CD8-positive, alpha-beta T cell (primary cell): ENCODE measurements at regions of chr4 and their contacts with region 1.

Region 1: GRCh38 chr4:986879-987623 is at the start of gene IDUA:
- DNase-seq: peak; percentile 76 to 94 (median 87)
- ATAC-seq: peak; percentile 85
- H3K4me3 ChIP-seq: peak within 1 kb of the TSS; percentile 64 to 89
- H3K4me3 Mint-ChIP-seq: peak within 1 kb of the TSS; percentile 89
- H3K27ac ChIP-seq: peak within 1 kb of the TSS; percentile 62 to 65
- H3K27ac Mint-ChIP-seq: peak within 1 kb of the TSS; percentile 91
- H3K4me1 ChIP-seq: peaks cover 35% of the 10 kb centered on the region
- H3K4me1 Mint-ChIP-seq: peaks cover 31% of the 10 kb centered on the region
- H3K27me3 ChIP-seq: no peaks in the 10 kb centered on the region
- H3K27me3 Mint-ChIP-seq: no peaks in the 10 kb centered on the region
- CTCF ChIP-seq: peak; percentile 61
- total RNA-seq, gene IDUA: 54.3 to 62.0 TPM

Region 2: GRCh38 chr4:337143-337931 is 649.7 kb before region 1 on chr4 and contains the start of gene ZNF141:
- CTCF ChIA-PET with region 1: no interaction called
- POLR2A ChIA-PET with region 1: no interaction called
- intact Hi-C with region 1: loop called in 1 of 2 experiments (anchors 5 kb)
- DNase-seq: peak; percentile 84 to 97 (median 91)
- ATAC-seq: peak; percentile 88
- H3K4me3 ChIP-seq: peak within 1 kb of the TSS; percentile 94 to 95
- H3K4me3 Mint-ChIP-seq: peak within 1 kb of the TSS; percentile 99
- H3K27ac ChIP-seq: peak within 1 kb of the TSS; percentile 90 to 95
- H3K27ac Mint-ChIP-seq: peak within 1 kb of the TSS; percentile 99
- H3K4me1 ChIP-seq: peaks cover 17% of the 10 kb centered on the region
- H3K4me1 Mint-ChIP-seq: peaks cover 46% of the 10 kb centered on the region
- H3K27me3 ChIP-seq: no peaks in the 10 kb centered on the region
- H3K27me3 Mint-ChIP-seq: no peaks in the 10 kb centered on the region
- CTCF ChIP-seq: no peak
- total RNA-seq, gene ZNF141: 16.3 to 19.9 TPM

Region 3: DNA sequence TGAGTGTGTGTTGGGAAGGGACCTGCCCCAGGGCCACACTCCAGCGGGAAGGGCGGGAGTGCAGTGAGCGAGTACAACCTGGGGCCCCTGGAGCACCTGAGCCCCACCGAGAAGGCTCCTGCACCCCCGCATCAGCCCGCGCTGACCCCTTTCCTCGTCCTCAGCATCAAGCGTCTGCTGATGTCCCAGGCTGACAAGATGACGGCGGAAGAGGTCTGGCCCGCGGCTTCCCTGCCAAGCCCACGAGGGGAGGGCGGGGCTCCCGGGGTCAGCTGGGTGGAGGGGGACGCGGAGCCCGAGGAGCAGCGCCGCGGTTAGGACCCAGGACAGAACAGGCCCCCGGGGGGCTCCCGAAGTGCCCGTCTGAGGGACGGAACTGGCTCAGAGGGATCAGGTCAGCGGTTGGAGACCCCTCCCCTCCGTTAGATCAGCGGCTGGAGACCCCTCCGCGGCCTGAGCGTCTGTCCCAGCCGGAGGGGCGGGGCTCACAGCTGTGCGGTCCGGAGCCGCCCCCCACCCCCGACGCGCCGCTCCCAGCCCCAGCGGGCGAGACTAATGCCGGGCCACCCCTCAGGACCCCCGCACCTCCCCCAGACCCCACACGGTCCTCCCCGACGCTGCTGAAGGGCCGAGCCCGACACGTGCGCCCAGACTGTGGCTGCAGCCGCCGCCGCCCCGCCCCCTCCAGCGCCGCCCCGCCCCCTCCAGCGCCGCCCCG is 306.0 kb before region 1 on chr4:
- CTCF ChIA-PET with region 1: no interaction called
- POLR2A ChIA-PET with region 1: no interaction called
- intact Hi-C with region 1: no loop called
- DNase-seq: peak in 7 of 9 experiments; percentile 41 to 76 (median 55)
- ATAC-seq: peak; percentile 48
- H3K4me3 ChIP-seq: peak overlapping the region; percentile 54 to 56
- H3K4me3 Mint-ChIP-seq: peak overlapping the region; percentile 63
- H3K27ac ChIP-seq: peak overlapping the region in 1 of 2 experiments; percentile 69
- H3K27ac Mint-ChIP-seq: peak overlapping the region; percentile 27
- H3K4me1 ChIP-seq: peaks cover 9% of the 10 kb centered on the region
- H3K4me1 Mint-ChIP-seq: peaks cover 13% of the 10 kb centered on the region
- H3K27me3 ChIP-seq: no peaks in the 10 kb centered on the region
- H3K27me3 Mint-ChIP-seq: peaks cover 8% of the 10 kb centered on the region
- CTCF ChIP-seq: no peak

Region 4: GRCh38 chr4:705278-706082 is 281.6 kb before region 1 on chr4 and contains the start of gene PCGF3:
- CTCF ChIA-PET with region 1: no interaction called
- POLR2A ChIA-PET with region 1: no interaction called
- intact Hi-C with region 1: loop called in 1 of 2 experiments (anchors 1 kb)
- DNase-seq: peak; percentile 92 to 97 (median 95)
- ATAC-seq: peak; percentile 98
- H3K4me3 ChIP-seq: peak within 1 kb of the TSS; percentile 75 to 89
- H3K4me3 Mint-ChIP-seq: peak within 1 kb of the TSS; percentile 82
- H3K27ac ChIP-seq: peak within 1 kb of the TSS; percentile 68 to 75
- H3K27ac Mint-ChIP-seq: peak within 1 kb of the TSS; percentile 60
- H3K4me1 ChIP-seq: peaks cover 24% of the 10 kb centered on the region
- H3K4me1 Mint-ChIP-seq: peaks cover 28% of the 10 kb centered on the region
- H3K27me3 ChIP-seq: no peaks in the 10 kb centered on the region
- H3K27me3 Mint-ChIP-seq: no peaks in the 10 kb centered on the region
- CTCF ChIP-seq: no peak
- total RNA-seq, gene PCGF3: 39.1 to 39.5 TPM

Region 5: DNA sequence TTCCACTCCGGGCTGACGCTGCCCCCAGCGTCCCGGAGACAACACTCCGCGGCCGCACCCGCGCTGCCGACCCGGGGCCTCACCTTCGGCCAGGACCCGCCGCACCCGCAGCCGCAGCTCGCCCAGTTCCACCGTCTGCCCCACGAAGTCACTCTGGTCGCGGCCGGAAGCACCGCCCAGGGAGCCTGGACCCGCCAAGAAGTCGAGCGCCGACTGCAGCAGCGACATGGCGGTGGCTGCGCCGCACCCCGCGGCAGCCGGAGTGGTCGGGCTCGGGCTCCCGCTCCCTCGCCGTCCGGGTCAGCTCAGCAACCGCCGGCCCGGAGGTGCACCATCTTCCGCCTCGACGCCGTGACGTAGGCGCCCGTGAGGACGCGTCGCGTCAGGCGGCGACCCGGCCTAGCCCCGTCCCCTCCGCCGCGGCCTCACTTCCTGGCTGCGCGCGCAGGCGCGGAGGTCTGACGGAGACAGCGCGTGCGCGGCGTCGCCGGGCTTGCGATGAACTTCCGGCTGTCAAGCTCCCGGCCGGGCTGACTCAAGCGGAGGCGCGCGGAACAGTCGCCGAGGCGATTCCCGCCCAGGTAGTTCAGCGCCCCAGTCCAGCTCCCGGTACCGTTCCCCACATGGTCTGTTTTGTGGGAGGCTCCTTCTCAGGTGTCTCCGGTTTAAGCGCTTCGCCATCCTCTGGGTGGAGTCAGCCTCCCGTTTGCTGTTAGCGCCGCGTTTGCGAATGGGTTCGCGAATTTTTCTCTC is 54.9 kb before region 1 on chr4 and contains the starts of genes GAK and TMEM175:
- CTCF ChIA-PET with region 1: interaction called, 9 read pairs
- POLR2A ChIA-PET with region 1: interaction called, 7 read pairs
- intact Hi-C with region 1: loop called (anchors 1 kb)
- DNase-seq: peak; percentile 90 to 99 (median 96)
- ATAC-seq: peak; percentile 91
- H3K4me3 ChIP-seq: peak within 1 kb of the TSS; percentile 91 to 96
- H3K4me3 Mint-ChIP-seq: peak within 1 kb of the TSS; percentile 96
- H3K27ac ChIP-seq: peak within 1 kb of the TSS; percentile 91 to 92
- H3K27ac Mint-ChIP-seq: peak within 1 kb of the TSS; percentile 97
- H3K4me1 ChIP-seq: peaks cover 39% of the 10 kb centered on the region
- H3K4me1 Mint-ChIP-seq: peaks cover 51% of the 10 kb centered on the region
- H3K27me3 ChIP-seq: no peaks in the 10 kb centered on the region
- H3K27me3 Mint-ChIP-seq: no peaks in the 10 kb centered on the region
- CTCF ChIP-seq: no peak
- total RNA-seq, gene GAK: 161 to 162 TPM
- total RNA-seq, gene TMEM175: 44.9 to 47.2 TPM

Region 6: DNA sequence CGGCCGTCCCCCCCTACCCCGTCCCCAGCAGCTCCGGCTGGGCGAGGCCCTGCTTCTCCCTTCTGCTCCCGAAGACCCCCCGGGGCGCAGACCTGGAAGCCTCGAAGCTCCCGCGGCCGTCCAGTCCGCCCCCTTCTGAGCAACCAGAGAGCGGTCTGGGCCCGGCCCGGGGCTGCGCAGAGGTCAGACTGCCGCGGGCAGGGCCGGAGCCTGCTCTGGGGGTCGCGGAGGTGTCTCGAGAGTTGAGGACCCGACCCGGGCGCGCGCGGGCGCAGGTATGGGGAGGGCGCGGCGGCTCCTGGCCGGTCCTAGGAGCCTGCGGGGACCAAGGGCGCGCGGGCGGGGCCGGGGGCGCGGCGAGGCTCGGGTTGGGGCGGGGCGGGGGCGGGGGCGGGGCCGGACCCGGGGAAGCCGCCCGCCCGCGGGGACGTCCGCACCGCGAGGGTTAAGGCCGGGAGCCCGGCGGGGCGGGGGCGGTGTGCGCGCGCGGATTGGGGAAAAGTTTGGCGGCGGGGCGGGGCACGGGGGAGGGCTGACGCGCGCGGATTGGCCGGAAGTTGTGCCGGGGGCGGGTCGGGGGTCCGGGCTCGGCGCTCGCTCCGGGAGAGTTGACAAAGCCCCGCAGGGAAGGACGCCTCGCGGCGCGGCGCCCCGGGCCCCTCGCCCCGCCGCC is 24.1 kb after region 1 on chr4 and contains the start of gene FGFRL1:
- CTCF ChIA-PET with region 1: interaction called, 3 read pairs
- POLR2A ChIA-PET with region 1: interaction called, 3 read pairs
- intact Hi-C with region 1: loop called (anchors 1 kb)
- DNase-seq: peak; percentile 83 to 94 (median 93)
- ATAC-seq: peak; percentile 55
- H3K4me3 ChIP-seq: peak within 1 kb of the TSS; percentile 65 to 86
- H3K4me3 Mint-ChIP-seq: peak within 1 kb of the TSS; percentile 89
- H3K27ac ChIP-seq: peak within 1 kb of the TSS; percentile 65 to 71
- H3K27ac Mint-ChIP-seq: peak within 1 kb of the TSS; percentile 96
- H3K4me1 ChIP-seq: peaks cover 26% of the 10 kb centered on the region
- H3K4me1 Mint-ChIP-seq: peaks cover 12% of the 10 kb centered on the region
- H3K27me3 ChIP-seq: peaks cover 0 to 9% of the 10 kb centered on the region in 2 experiments
- H3K27me3 Mint-ChIP-seq: peaks cover 25% of the 10 kb centered on the region
- CTCF ChIP-seq: no peak
- total RNA-seq, gene FGFRL1: 26.3 to 30.2 TPM

Region 7: DNA sequence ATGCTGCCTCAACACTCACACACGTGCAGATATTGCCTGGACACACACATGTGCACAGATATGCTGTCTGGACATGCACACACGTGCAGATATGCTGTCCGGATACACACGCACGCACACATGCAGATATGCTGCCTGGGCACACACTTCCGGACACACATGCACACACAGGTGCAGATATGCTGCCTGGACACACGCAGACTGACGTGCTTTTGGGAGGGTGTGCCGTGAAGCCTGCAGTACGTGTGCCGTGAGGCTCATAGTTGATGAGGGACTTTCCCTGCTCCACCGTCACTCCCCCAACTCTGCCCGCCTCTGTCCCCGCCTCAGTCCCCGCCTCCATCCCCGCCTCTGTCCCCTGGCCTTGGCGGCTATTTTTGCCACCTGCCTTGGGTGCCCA is 39.1 kb after region 1 on chr4:
- CTCF ChIA-PET with region 1: no interaction called
- POLR2A ChIA-PET with region 1: no interaction called
- intact Hi-C with region 1: no loop called
- DNase-seq: peak in 4 of 9 experiments; percentile 15 to 69 (median 48)
- ATAC-seq: peak; percentile 70
- H3K4me3 ChIP-seq: no peak overlapping the region
- H3K4me3 Mint-ChIP-seq: no peak overlapping the region
- H3K27ac ChIP-seq: no peak overlapping the region
- H3K27ac Mint-ChIP-seq: no peak overlapping the region
- H3K4me1 ChIP-seq: no peaks in the 10 kb centered on the region
- H3K4me1 Mint-ChIP-seq: peaks cover 5% of the 10 kb centered on the region
- H3K27me3 ChIP-seq: no peaks in the 10 kb centered on the region
- H3K27me3 Mint-ChIP-seq: no peaks in the 10 kb centered on the region
- CTCF ChIP-seq: no peak

Region 8: DNA sequence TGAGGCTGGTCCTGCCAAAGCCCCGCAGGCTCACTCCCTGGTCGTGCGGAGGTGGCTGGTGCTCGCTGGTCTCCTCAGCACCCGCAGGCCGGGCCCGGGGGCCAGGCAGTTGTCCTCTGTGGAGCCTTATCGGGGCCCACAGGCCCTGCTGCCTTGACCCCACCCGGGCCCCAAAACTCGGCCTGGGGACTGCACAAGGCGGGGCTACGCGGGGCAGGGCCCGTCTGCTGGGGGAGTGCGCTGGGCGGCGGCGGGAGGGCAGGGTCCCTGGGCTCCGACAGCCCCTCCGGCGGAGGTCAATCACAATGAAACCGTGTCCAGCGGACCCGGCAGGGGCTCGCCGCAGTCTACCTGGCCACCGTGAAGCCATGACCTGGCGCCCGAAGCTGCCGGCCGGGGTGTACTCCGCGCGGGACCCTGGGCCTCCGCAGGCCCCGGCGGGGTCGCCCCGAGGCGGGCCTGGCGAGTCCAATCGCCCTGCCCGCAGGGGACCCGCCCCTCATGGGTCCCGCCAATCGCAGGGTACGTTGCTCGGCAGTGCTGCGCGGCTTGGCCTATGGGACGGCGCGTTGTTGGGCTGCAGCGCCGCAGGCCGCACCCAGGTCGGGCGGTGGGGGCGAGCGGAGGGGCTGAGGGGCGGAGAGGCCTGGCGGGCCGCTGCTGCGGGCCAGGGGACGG is 1856.4 kb after region 1 on chr4 and contains the start of gene ADD1:
- CTCF ChIA-PET with region 1: no interaction called
- POLR2A ChIA-PET with region 1: no interaction called
- intact Hi-C with region 1: no loop called
- DNase-seq: peak; percentile 84 to 100 (median 96)
- ATAC-seq: peak; percentile 93
- H3K4me3 ChIP-seq: peak within 1 kb of the TSS; percentile 65 to 94
- H3K4me3 Mint-ChIP-seq: peak within 1 kb of the TSS; percentile 94
- H3K27ac ChIP-seq: peak within 1 kb of the TSS; percentile 71 to 78
- H3K27ac Mint-ChIP-seq: peak within 1 kb of the TSS; percentile 95
- H3K4me1 ChIP-seq: peaks cover 42% of the 10 kb centered on the region
- H3K4me1 Mint-ChIP-seq: peaks cover 64% of the 10 kb centered on the region
- H3K27me3 ChIP-seq: no peaks in the 10 kb centered on the region
- H3K27me3 Mint-ChIP-seq: no peaks in the 10 kb centered on the region
- CTCF ChIP-seq: no peak
- total RNA-seq, gene ADD1: 129 TPM